ENCODE measurements at regions of chr9 and their contacts with region 1.

Region 1: DNA sequence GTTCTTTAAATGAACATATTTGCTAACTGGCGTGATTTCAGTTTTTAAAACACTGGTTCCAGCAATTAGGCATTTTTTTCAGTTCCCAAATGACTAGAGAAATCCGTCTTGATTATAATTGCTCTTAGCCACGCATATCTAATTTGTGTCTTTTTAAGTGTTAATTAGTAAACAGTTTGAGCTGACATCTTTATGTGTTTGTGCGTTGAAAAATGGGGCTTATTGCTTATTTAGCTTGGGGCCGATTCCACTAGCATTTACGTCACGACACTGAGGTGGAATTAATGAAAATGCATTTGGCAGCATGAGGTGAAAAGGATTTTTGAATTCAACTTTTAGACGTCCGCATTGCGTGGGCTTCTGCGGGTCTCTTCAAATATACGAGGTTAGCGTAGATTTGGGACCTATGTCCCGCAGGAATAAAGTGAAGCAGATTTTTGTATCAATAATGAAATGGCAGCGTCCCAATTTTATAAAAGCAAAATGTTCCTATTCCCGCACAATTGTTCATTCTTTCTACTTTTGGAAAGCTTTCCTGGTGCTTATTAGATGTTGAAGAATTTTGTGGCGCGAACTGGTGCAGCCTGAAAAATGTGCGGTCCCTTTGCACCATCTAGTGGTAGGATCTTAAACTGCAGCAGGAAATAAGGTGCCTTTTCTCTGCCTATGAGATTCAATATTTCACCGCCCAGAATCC is 122.7 kb upstream of the LMX1B start:
- DNase-seq: no peak
- H3K4me3 ChIP-seq: no peak overlapping the region
- H3K27ac ChIP-seq: no peak overlapping the region
- H3K4me1 ChIP-seq: peaks cover 0 to 4% (median 2%) of the 10 kb centered on the region in 4 donors
- H3K27me3 ChIP-seq: no peaks in the 10 kb centered on the region
- CTCF ChIP-seq: peak; percentile 92 to 97 (median 96)
- EP300 ChIP-seq: no peak
- POLR2A ChIP-seq: no peak

Region 2: GRCh38 chr9:126301985-126302603 is 188.9 kb before region 1 on chr9:
- intact Hi-C with region 1: loop called (anchors 5 kb)
- DNase-seq: no peak
- H3K4me3 ChIP-seq: no peak overlapping the region
- H3K27ac ChIP-seq: no peak overlapping the region
- H3K4me1 ChIP-seq: peaks cover 0 to 1% (median 0%) of the 10 kb centered on the region in 4 donors
- H3K27me3 ChIP-seq: no peaks in the 10 kb centered on the region
- CTCF ChIP-seq: peak; percentile 55 to 68 (median 55)
- EP300 ChIP-seq: no peak
- POLR2A ChIP-seq: no peak